CD4-positive, alpha-beta memory T cell (primary cell): ENCODE measurements at regions of chr5 and their contacts with region 1.

Region 1: DNA sequence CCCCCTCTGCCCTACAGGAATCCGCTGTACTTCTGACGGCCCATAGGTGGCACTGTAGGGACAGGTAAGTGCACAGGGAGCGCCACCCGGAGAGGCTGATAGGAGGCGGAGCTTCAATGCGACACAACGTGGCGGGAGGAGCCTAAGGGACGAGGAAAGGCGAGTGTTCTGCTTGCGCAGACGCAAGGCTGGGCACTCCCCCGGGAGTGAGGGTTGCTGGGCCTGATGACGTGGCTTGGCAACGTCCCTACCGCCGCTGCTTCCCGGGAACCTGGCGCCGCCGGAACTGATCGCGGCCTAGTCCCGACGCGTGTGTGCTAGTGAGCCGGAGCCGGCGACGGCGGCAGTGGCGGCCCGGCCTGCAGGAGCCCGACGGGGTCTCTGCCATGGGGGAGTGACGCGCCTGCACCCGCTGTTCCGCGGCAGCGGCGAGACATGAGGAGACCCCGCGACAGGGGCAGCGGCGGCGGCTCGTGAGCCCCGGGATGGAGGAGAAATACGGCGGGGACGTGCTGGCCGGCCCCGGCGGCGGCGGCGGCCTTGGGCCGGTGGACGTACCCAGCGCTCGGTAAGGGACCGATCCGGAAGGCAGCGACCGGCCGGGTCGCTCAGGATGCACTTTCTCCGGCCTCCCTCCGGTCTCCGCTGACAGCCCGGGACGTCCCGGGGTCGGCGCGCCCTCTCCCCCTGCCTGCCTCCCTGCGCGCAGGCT is at the start of gene SLC30A5:
- DNase-seq: peak; percentile 95 to 100 (median 99)
- H3K4me3 ChIP-seq: peak within 1 kb of the TSS; percentile 19 to 75
- H3K4me3 Mint-ChIP-seq: peak within 1 kb of the TSS; percentile 90 to 98 (median 92)
- H3K27ac ChIP-seq: peak within 1 kb of the TSS; percentile 97
- H3K27ac Mint-ChIP-seq: peak within 1 kb of the TSS; percentile 95 to 98 (median 97)
- H3K4me1 ChIP-seq: peaks cover 39% of the 10 kb centered on the region
- H3K4me1 Mint-ChIP-seq: peaks cover 21 to 50% (median 31%) of the 10 kb centered on the region in 4 donors
- H3K27me3 ChIP-seq: no peaks in the 10 kb centered on the region
- H3K27me3 Mint-ChIP-seq: no peaks in the 10 kb centered on the region
- total RNA-seq, gene SLC30A5: 44.9 to 50.2 TPM

Region 2: GRCh38 chr5:69007726-69008368 is 86.1 kb before region 1 on chr5:
- CTCF ChIA-PET with region 1: no interaction called
- POLR2A ChIA-PET with region 1: no interaction called
- intact Hi-C with region 1: no loop called
- DNase-seq: peak; percentile 49 to 57 (median 54)
- H3K4me3 ChIP-seq: no peak overlapping the region
- H3K4me3 Mint-ChIP-seq: no peak overlapping the region
- H3K27ac ChIP-seq: no peak overlapping the region
- H3K27ac Mint-ChIP-seq: no peak overlapping the region
- H3K4me1 ChIP-seq: no peaks in the 10 kb centered on the region
- H3K4me1 Mint-ChIP-seq: no peaks in the 10 kb centered on the region
- H3K27me3 ChIP-seq: no peaks in the 10 kb centered on the region
- H3K27me3 Mint-ChIP-seq: peaks cover 15 to 18% of the 10 kb centered on the region in 2 donors

Region 3: GRCh38 chr5:69042915-69043658 is 50.8 kb before region 1 on chr5:
- CTCF ChIA-PET with region 1: interaction called, 30 read pairs
- POLR2A ChIA-PET with region 1: interaction called, 3 read pairs
- intact Hi-C with region 1: loop called (anchors 1 kb)
- DNase-seq: peak; percentile 84 to 90 (median 88)
- H3K4me3 ChIP-seq: peak overlapping the region; percentile 37 to 62
- H3K4me3 Mint-ChIP-seq: peak overlapping the region; percentile 81 to 96 (median 87)
- H3K27ac ChIP-seq: peak overlapping the region; percentile 54
- H3K27ac Mint-ChIP-seq: peak overlapping the region; percentile 74 to 96 (median 91)
- H3K4me1 ChIP-seq: peaks cover 5% of the 10 kb centered on the region
- H3K4me1 Mint-ChIP-seq: peaks cover 2 to 12% (median 6%) of the 10 kb centered on the region in 4 donors
- H3K27me3 ChIP-seq: no peaks in the 10 kb centered on the region
- H3K27me3 Mint-ChIP-seq: no peaks in the 10 kb centered on the region

Region 4: DNA sequence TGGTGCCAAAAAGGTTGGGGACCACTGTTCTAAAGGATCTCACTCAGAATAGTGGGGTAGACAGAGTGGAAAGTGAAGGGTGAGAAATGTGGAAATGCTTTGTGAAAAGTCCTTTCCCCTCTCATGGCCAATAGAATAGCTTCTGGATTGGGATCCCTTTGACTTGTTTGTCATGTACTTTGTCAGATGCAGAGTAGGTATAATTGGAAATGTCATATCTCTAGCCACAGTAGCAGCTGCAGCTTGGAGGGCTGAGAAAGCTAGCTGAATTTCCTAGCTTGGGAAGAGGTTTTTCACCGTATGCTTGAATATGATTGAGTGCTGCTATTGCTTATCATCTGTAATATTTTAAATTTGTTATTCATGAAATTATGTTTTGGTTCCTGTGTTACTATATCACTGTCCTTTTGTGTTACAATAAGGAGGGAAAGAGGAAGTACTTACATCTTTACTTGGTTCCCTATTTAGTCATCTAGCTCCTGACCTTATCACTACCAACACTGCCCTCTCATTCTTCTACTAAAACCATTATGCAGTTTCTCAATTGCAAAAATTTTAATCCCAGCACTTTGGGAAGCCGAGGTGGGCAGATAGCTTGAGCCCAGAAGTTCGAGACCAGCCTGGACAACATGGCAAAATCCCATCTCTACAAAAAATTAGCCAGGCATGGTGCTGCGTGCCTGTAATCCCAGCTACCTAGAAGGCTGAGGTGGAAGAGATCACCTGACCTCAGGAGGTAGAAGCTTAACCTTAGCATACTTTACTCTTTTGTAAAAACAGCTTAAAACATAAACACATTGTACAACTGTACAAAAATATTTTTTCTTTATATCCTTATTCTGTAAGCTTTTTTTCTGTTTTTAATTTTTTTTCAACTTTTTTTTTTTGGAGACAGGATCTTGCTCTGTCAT is 12.3 kb after region 1 on chr5:
- CTCF ChIA-PET with region 1: interaction called, 12 read pairs
- POLR2A ChIA-PET with region 1: interaction called, 3 read pairs
- intact Hi-C with region 1: no loop called
- DNase-seq: no peak
- H3K4me3 ChIP-seq: no peak overlapping the region
- H3K4me3 Mint-ChIP-seq: no peak overlapping the region
- H3K27ac ChIP-seq: no peak overlapping the region
- H3K27ac Mint-ChIP-seq: peak overlapping the region in 3 of 7 donors; percentile 11 to 52 (median 37)
- H3K4me1 ChIP-seq: no peaks in the 10 kb centered on the region
- H3K4me1 Mint-ChIP-seq: peaks cover 0 to 5% (median 2%) of the 10 kb centered on the region in 4 donors
- H3K27me3 ChIP-seq: no peaks in the 10 kb centered on the region
- H3K27me3 Mint-ChIP-seq: no peaks in the 10 kb centered on the region

Region 5: GRCh38 chr5:69189162-69190086 is 95.5 kb after region 1 on chr5 and contains the start of gene CENPH:
- CTCF ChIA-PET with region 1: interaction called, 8 read pairs
- POLR2A ChIA-PET with region 1: interaction called, 5 read pairs
- intact Hi-C with region 1: loop called (anchors 1 kb)
- DNase-seq: peak; percentile 90 to 92 (median 91)
- H3K4me3 ChIP-seq: peak within 1 kb of the TSS; percentile 78
- H3K4me3 Mint-ChIP-seq: peak within 1 kb of the TSS; percentile 89 to 95 (median 92)
- H3K27ac ChIP-seq: peak within 1 kb of the TSS; percentile 68
- H3K27ac Mint-ChIP-seq: peak within 1 kb of the TSS; percentile 90 to 97 (median 96)
- H3K4me1 ChIP-seq: peaks cover 13% of the 10 kb centered on the region
- H3K4me1 Mint-ChIP-seq: peaks cover 5 to 21% (median 14%) of the 10 kb centered on the region in 4 donors
- H3K27me3 ChIP-seq: no peaks in the 10 kb centered on the region
- H3K27me3 Mint-ChIP-seq: no peaks in the 10 kb centered on the region
- total RNA-seq, gene CENPH: 6.1 to 6.9 TPM

Region 6: DNA sequence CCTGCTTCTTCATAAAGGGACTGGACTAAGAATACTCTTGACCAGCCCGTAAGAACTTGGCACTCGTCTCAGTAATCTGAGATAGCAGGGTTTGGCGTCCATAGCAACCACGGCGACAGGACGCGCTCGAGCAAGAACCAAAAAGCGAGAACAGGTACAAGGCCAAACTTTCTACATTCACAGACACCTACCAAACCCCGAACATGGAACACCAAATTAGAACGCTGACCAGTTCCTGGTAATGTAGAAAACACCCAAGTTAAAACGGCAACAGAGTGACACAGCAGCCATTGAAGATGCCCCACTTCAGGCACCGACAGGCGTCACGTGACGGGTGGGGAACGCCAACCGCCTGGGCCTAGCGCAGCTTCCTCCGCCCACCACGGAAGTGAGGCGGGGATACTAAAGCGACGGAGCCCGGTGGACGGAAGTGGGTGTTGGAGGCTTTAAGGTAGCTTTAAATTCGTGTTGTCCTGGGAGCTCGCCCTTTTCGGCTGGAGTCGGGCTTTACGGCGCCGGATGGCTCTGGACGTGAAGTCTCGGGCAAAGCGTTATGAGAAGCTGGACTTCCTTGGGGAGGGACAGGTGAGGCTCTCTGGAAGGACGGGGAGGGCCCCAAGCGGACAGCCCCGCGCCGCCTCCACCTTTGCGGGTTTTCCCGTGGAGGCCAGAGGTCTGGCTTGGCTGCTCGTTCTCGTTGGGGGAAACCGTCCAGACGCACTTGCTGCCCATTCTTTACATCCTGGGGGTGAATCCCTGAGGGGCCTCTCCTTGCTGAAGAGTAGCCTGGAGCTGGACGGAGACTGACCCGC is 140.7 kb after region 1 on chr5 and contains the start of gene CDK7:
- CTCF ChIA-PET with region 1: interaction called, 7 read pairs
- POLR2A ChIA-PET with region 1: interaction called, 10 read pairs
- intact Hi-C with region 1: loop called (anchors 1 kb)
- DNase-seq: peak; percentile 88 to 95 (median 90)
- H3K4me3 ChIP-seq: peak within 1 kb of the TSS; percentile 93 to 97
- H3K4me3 Mint-ChIP-seq: peak within 1 kb of the TSS; percentile 92 to 99 (median 98)
- H3K27ac ChIP-seq: peak within 1 kb of the TSS; percentile 91
- H3K27ac Mint-ChIP-seq: peak within 1 kb of the TSS; percentile 83 to 97 (median 96)
- H3K4me1 ChIP-seq: peaks cover 31% of the 10 kb centered on the region
- H3K4me1 Mint-ChIP-seq: peaks cover 26 to 58% (median 40%) of the 10 kb centered on the region in 4 donors
- H3K27me3 ChIP-seq: no peaks in the 10 kb centered on the region
- H3K27me3 Mint-ChIP-seq: no peaks in the 10 kb centered on the region
- total RNA-seq, gene CDK7: 16.5 to 20.2 TPM

Region 7: DNA sequence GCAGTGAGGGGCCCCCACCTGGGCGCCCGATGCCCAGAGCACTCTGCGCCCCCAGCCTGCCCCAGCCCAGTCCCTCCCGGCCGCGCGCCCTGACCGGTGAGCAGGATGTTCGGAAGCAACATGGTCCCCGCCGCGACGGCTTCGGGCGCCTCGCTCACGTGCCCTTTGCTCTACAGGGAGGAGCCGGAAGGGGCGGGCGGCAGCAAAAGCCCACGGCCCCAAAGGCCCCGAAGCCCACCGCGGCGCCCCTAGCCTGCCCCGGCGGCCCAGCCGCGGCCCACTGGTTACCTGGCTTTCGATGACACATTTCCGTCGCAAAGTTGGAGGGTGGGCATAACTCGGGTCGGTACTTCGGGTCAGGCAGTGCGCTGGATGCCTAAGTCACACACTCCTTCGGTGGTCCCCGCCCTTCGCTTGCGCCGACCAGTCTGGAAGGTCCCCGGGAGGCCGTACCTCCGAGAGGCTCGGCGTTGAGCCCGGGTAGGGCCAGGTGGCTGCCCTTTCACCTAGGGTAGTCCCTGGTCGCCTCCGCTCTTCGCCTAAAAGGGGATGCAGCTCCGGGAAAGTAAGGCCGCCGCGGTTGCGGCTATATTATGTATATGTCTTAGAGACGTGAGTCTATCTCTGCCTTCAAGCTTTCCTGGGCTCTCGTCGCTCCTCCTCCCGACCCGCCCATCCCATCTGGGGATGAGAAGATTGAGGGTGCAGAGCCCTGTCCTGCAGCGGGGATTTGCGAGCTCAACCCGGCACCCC is 275.6 kb after region 1 on chr5 and contains the starts of genes AK6, RAD17 and TAF9:
- CTCF ChIA-PET with region 1: interaction called, 10 read pairs
- POLR2A ChIA-PET with region 1: interaction called, 7 read pairs
- intact Hi-C with region 1: loop called (anchors 1 kb)
- DNase-seq: peak; percentile 94 to 98 (median 96)
- H3K4me3 ChIP-seq: peak within 1 kb of the TSS; percentile 67 to 75
- H3K4me3 Mint-ChIP-seq: peak within 1 kb of the TSS; percentile 95 to 99 (median 98)
- H3K27ac ChIP-seq: peak within 1 kb of the TSS; percentile 99
- H3K27ac Mint-ChIP-seq: peak within 1 kb of the TSS; percentile 99 to 100 (median 99)
- H3K4me1 ChIP-seq: peaks cover 29% of the 10 kb centered on the region
- H3K4me1 Mint-ChIP-seq: peaks cover 24 to 67% (median 46%) of the 10 kb centered on the region in 4 donors
- H3K27me3 ChIP-seq: no peaks in the 10 kb centered on the region
- H3K27me3 Mint-ChIP-seq: no peaks in the 10 kb centered on the region
- total RNA-seq, gene AK6: 25.3 to 31.4 TPM
- total RNA-seq, gene RAD17: 30.7 to 31.1 TPM
- total RNA-seq, gene TAF9: 42.3 to 45.9 TPM